T-cell (primary cell): ENCODE measurements at regions of chr10 and their contacts with region 1.

Region 1: GRCh38 chr10:23314835-23315239 is 29.8 kb downstream of the C10orf67 start:
- DNase-seq: peak in 30 of 35 experiments; percentile 3 to 83 (median 34)
- ATAC-seq: no peak
- H3K4me3 ChIP-seq: no peak overlapping the region
- H3K4me3 Mint-ChIP-seq: no peak overlapping the region
- H3K27ac ChIP-seq: no peak overlapping the region
- H3K27ac Mint-ChIP-seq: no peak overlapping the region
- H3K4me1 ChIP-seq: no peaks in the 10 kb centered on the region
- H3K4me1 Mint-ChIP-seq: peaks cover 0 to 3% (median 0%) of the 10 kb centered on the region in 3 donors
- H3K27me3 ChIP-seq: peaks cover 0 to 11% of the 10 kb centered on the region in 2 experiments
- H3K27me3 Mint-ChIP-seq: peaks cover 2 to 5% of the 10 kb centered on the region in 2 donors

Region 2: DNA sequence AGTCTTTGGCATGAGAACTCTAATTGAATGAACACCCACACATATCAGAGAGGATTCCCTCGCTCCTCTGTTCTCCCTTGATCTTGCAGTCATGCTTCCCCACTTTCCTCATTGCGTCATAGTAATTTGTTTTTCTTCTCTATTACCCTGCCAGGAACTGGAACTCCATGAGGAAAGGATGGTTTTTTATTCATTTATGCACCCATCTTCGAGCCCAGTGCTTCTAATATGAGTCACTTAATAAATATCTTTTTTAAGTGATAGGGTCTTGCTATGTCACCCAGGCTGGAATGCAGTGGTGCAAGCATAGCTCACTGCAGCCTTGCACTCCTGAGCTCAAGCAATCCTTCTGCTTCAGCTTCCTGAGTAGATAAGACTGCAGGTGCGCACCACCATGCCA is 207.5 kb after region 1 on chr10:
- CTCF ChIA-PET with region 1: interaction called, 28 to 33 read pairs
- POLR2A ChIA-PET with region 1: no interaction called
- DNase-seq: no peak
- ATAC-seq: no peak
- H3K4me3 ChIP-seq: no peak overlapping the region
- H3K4me3 Mint-ChIP-seq: no peak overlapping the region
- H3K27ac ChIP-seq: no peak overlapping the region
- H3K27ac Mint-ChIP-seq: no peak overlapping the region
- H3K4me1 ChIP-seq: no peaks in the 10 kb centered on the region
- H3K4me1 Mint-ChIP-seq: no peaks in the 10 kb centered on the region
- H3K27me3 ChIP-seq: no peaks in the 10 kb centered on the region
- H3K27me3 Mint-ChIP-seq: peaks cover 7 to 9% of the 10 kb centered on the region in 2 donors

Region 3: DNA sequence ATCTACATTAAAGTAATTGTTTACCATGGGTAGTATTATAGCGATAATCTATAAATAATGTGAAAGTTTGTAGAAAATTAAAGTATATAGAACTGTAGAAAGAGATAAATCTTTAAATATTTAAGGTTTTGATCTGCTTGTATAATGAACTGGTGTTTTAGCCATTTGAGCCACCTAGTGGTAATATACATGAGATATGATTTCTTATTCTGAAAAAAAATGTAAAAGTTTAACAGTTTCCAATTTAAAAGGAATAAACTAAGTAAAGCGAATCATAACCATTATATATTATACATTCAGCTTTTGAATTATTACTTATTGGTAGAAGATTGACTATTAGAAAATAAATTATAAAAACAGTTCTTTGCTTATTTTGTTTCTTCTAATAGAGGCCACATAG is 215.2 kb after region 1 on chr10:
- CTCF ChIA-PET with region 1: interaction called, 28 to 33 read pairs
- POLR2A ChIA-PET with region 1: no interaction called
- DNase-seq: peak in 1 of 35 experiments; percentile 20
- ATAC-seq: no peak
- H3K4me3 ChIP-seq: no peak overlapping the region
- H3K4me3 Mint-ChIP-seq: no peak overlapping the region
- H3K27ac ChIP-seq: no peak overlapping the region
- H3K27ac Mint-ChIP-seq: no peak overlapping the region
- H3K4me1 ChIP-seq: peaks cover 3 to 9% of the 10 kb centered on the region in 2 experiments
- H3K4me1 Mint-ChIP-seq: peaks cover 8 to 20% (median 8%) of the 10 kb centered on the region in 3 donors
- H3K27me3 ChIP-seq: no peaks in the 10 kb centered on the region
- H3K27me3 Mint-ChIP-seq: peaks cover 0 to 2% of the 10 kb centered on the region in 2 donors